Activated T-helper 1 cell treated with anti-CD3 and anti-CD28 coated beads, Interleukin-12 subunit alpha, Interleukin-12 subunit beta, Interleukin-2, Interleukin-4 antibody, amounts not matched to agents 30 ng/mL and 10 ng/mL and 1 ng/mL, durations not matched to agents 14 hours and 24 hours and 36 hours (primary cell): ENCODE measurements at regions of chr9 and their contacts with region 1.

Region 1: GRCh38 chr9:88593537-88594185 is 58.7 kb downstream of the NXNL2 start:
- DNase-seq: peak; percentile 19
- H3K4me3 Mint-ChIP-seq: no peak overlapping the region
- H3K27ac Mint-ChIP-seq: no peak overlapping the region
- H3K4me1 Mint-ChIP-seq: peaks cover 8% of the 10 kb centered on the region
- H3K27me3 Mint-ChIP-seq: peaks cover 21% of the 10 kb centered on the region

Region 2: DNA sequence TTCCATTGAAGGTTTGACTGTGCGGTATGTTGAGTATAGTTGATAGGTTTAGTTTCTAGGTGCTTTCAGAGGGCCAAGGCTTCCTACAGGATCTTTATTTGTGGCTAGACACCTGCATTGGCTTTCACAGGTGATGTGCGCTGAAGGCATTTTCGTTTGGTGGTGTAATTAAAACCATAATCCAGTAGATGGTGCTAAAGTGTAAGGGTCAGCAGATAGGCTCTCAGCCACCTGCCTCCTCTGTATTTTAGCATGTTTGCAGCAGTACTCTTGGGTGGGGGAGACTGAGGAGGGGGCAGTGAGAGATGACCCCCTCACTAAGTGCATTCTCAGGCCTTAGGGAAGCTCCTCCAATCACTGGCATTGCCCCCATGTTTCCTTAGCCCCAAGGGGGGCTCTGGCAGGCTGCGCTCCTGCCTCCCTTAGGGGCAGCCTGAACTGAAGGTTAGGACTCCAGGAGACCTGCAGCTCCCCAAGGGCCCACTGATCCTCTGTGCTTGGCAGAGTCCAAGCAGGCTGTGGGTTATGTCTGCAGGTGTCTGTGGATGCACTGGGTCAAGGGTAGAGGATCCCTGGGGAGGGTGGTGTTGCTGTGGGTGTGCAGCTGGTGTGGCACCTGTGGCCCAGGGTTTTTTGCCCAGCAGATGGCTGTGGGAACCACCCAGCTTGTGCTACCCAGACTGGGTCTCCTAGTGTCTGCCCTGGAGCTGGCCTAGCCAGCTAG is 642.7 kb before region 1 on chr9:
- intact Hi-C with region 1: loop called (anchors 5 kb)
- DNase-seq: no peak
- H3K4me3 Mint-ChIP-seq: no peak overlapping the region
- H3K27ac Mint-ChIP-seq: no peak overlapping the region
- H3K4me1 Mint-ChIP-seq: no peaks in the 10 kb centered on the region
- H3K27me3 Mint-ChIP-seq: peaks cover 18% of the 10 kb centered on the region

Region 3: DNA sequence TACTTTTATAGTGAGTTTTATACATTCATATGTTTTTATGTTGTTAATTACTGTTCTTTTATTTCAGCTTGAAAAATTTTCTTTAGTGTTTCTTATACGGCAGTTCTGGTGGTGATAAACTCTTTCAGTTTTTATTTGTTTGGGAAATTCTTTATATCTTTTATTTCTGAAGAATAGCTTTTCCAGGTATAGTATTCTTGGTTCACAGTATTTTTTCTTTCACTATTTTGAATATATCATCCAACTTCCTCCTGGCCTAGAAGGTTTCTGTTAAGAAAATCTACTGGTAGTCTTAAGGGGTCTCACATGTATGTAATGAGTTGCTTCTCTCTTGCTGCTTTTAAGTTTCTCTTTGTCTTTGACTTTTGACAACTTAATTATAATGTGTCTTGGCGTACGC is 20.7 kb after region 1 on chr9:
- intact Hi-C with region 1: no loop called
- DNase-seq: no peak
- H3K4me3 Mint-ChIP-seq: no peak overlapping the region
- H3K27ac Mint-ChIP-seq: no peak overlapping the region
- H3K4me1 Mint-ChIP-seq: no peaks in the 10 kb centered on the region
- H3K27me3 Mint-ChIP-seq: peaks cover 6% of the 10 kb centered on the region

Region 4: GRCh38 chr9:88661759-88662158 is 68.1 kb after region 1 on chr9:
- intact Hi-C with region 1: no loop called
- DNase-seq: no peak
- H3K4me3 Mint-ChIP-seq: no peak overlapping the region
- H3K27ac Mint-ChIP-seq: no peak overlapping the region
- H3K4me1 Mint-ChIP-seq: no peaks in the 10 kb centered on the region
- H3K27me3 Mint-ChIP-seq: peaks cover 9% of the 10 kb centered on the region

Region 5: DNA sequence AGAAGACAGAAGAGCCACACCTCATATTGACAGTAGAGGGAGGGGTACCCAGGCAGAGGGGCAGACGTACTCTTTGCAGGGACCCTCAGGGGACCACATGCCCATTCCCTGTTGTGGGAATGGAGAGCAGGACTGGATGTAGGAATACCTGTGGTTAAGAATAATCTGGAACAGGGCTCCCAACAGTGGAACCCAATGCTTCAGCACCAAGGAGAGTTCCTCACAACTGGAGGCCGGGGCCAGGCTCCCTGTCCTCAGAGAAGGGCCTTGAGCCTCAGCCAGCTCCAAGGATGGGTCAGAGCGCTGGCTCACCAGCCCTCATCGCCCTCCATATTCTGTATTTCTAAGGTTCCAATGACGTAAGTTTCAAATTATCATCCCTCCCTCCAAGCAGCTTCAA is 592.3 kb after region 1 on chr9:
- intact Hi-C with region 1: no loop called
- DNase-seq: no peak
- H3K4me3 Mint-ChIP-seq: no peak overlapping the region
- H3K27ac Mint-ChIP-seq: no peak overlapping the region
- H3K4me1 Mint-ChIP-seq: no peaks in the 10 kb centered on the region
- H3K27me3 Mint-ChIP-seq: peaks cover 21% of the 10 kb centered on the region